ENCODE measurements at regions of chr15 and their contacts with region 1.

Region 1: DNA sequence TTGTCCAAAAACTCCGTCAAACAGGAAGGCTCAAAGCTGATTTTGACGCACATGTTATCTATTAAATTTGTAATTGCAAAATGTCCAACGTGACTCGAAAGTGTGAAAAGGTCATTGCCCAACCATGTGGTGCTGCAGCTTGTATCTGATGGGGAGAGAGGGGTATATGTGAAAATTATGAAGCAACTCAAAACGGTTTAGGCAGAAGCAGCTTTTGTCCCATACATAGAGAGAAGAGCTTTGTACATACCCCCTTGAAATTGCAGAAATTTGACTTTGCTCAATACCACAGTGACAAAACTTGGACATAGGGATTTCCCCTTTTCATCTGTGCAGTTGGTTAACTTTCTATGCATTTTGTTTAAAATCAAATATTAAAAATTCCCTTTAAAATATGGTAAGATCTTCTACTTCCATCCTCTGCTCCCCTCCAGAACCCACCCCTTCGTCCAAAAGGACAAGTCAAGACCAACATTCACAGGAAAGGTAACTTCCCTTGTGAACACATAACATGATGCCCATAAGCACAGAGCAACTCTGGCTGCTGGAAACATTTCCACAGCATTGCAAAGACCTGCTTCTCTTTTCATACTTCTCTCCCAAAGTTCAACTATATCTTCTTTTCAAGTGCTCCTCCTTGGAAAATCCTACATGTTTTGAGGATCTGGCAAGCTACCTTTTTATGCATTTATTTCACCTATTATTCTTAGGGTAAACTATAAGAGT is 253.7 kb upstream of the THBS1 start:
- DNase-seq: peak; percentile 95 to 97 (median 97)
- H3K4me3 ChIP-seq: peak overlapping the region in 1 of 3 experiments; percentile 5
- H3K4me3 Mint-ChIP-seq: peak overlapping the region in 1 of 2 donors; percentile 53
- H3K27ac ChIP-seq: peak overlapping the region; percentile 86 to 88
- H3K27ac Mint-ChIP-seq: peak overlapping the region; percentile 95 to 99 (median 98)
- H3K4me1 ChIP-seq: peaks cover 57 to 59% of the 10 kb centered on the region in 2 donors
- H3K4me1 Mint-ChIP-seq: peaks cover 60% of the 10 kb centered on the region
- H3K27me3 ChIP-seq: no peaks in the 10 kb centered on the region
- H3K27me3 Mint-ChIP-seq: no peaks in the 10 kb centered on the region
- CTCF ChIP-seq: no peak

Region 2: GRCh38 chr15:39260391-39260790 is 66.8 kb before region 1 on chr15:
- intact Hi-C with region 1: loop called (anchors 5 to 10 kb)
- DNase-seq: peak in 1 of 3 donors; percentile 12
- H3K4me3 ChIP-seq: no peak overlapping the region
- H3K4me3 Mint-ChIP-seq: peak overlapping the region in 1 of 2 donors; percentile 64
- H3K27ac ChIP-seq: no peak overlapping the region
- H3K27ac Mint-ChIP-seq: peak overlapping the region in 2 of 7 donors; percentile 28 to 62
- H3K4me1 ChIP-seq: peaks cover 15 to 18% of the 10 kb centered on the region in 2 donors
- H3K4me1 Mint-ChIP-seq: peaks cover 27% of the 10 kb centered on the region
- H3K27me3 ChIP-seq: peaks cover 7 to 9% of the 10 kb centered on the region in 2 donors
- H3K27me3 Mint-ChIP-seq: peaks cover 4 to 20% (median 8%) of the 10 kb centered on the region in 3 donors
- CTCF ChIP-seq: no peak

Region 3: GRCh38 chr15:39267685-39268084 is 59.5 kb before region 1 on chr15:
- intact Hi-C with region 1: loop called (anchors 5 to 10 kb)
- DNase-seq: peak; percentile 54 to 73 (median 56)
- H3K4me3 ChIP-seq: no peak overlapping the region
- H3K4me3 Mint-ChIP-seq: no peak overlapping the region
- H3K27ac ChIP-seq: no peak overlapping the region
- H3K27ac Mint-ChIP-seq: no peak overlapping the region
- H3K4me1 ChIP-seq: peaks cover 5% of the 10 kb centered on the region in 2 donors
- H3K4me1 Mint-ChIP-seq: peaks cover 12% of the 10 kb centered on the region
- H3K27me3 ChIP-seq: peaks cover 7 to 15% of the 10 kb centered on the region in 2 donors
- H3K27me3 Mint-ChIP-seq: peaks cover 11 to 38% (median 20%) of the 10 kb centered on the region in 3 donors
- CTCF ChIP-seq: no peak

Region 4: GRCh38 chr15:39358441-39359041 is 31.4 kb after region 1 on chr15:
- intact Hi-C with region 1: no loop called
- DNase-seq: no peak
- H3K4me3 ChIP-seq: no peak overlapping the region
- H3K4me3 Mint-ChIP-seq: no peak overlapping the region
- H3K27ac ChIP-seq: no peak overlapping the region
- H3K27ac Mint-ChIP-seq: no peak overlapping the region
- H3K4me1 ChIP-seq: peaks cover 9 to 20% of the 10 kb centered on the region in 2 donors
- H3K4me1 Mint-ChIP-seq: peaks cover 19% of the 10 kb centered on the region
- H3K27me3 ChIP-seq: no peaks in the 10 kb centered on the region
- H3K27me3 Mint-ChIP-seq: peaks cover 0 to 4% (median 4%) of the 10 kb centered on the region in 3 donors
- CTCF ChIP-seq: no peak

Region 5: DNA sequence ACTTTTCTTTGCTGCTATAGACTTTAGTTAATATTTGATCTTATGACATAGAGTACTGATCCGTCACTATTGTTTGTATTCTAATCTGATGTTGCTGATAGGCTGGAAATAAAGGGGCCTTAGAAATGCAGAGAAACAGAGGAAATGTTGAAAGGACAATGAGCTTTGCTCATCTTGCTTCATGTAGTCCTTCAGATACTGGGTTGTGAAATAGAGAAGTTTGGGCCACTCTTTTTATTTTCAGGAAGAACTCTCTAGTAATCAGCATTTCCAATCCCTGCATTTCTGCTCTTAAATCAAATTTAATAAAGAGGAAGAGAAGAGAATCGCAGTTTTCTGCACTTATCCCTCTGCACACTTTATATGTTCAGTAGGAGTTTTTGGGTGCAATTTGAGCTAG is 61.0 kb after region 1 on chr15:
- intact Hi-C with region 1: loop called in 1 of 2 experiments (anchors 5 kb)
- DNase-seq: peak; percentile 86 to 94 (median 91)
- H3K4me3 ChIP-seq: peak overlapping the region in 1 of 3 experiments; percentile 17
- H3K4me3 Mint-ChIP-seq: peak overlapping the region in 1 of 2 donors; percentile 36
- H3K27ac ChIP-seq: peak overlapping the region in 1 of 2 donors; percentile 89
- H3K27ac Mint-ChIP-seq: peak overlapping the region; percentile 87 to 95 (median 93)
- H3K4me1 ChIP-seq: peaks cover 51 to 84% of the 10 kb centered on the region in 2 donors
- H3K4me1 Mint-ChIP-seq: peaks cover 68% of the 10 kb centered on the region
- H3K27me3 ChIP-seq: no peaks in the 10 kb centered on the region
- H3K27me3 Mint-ChIP-seq: no peaks in the 10 kb centered on the region
- CTCF ChIP-seq: no peak

Region 6: DNA sequence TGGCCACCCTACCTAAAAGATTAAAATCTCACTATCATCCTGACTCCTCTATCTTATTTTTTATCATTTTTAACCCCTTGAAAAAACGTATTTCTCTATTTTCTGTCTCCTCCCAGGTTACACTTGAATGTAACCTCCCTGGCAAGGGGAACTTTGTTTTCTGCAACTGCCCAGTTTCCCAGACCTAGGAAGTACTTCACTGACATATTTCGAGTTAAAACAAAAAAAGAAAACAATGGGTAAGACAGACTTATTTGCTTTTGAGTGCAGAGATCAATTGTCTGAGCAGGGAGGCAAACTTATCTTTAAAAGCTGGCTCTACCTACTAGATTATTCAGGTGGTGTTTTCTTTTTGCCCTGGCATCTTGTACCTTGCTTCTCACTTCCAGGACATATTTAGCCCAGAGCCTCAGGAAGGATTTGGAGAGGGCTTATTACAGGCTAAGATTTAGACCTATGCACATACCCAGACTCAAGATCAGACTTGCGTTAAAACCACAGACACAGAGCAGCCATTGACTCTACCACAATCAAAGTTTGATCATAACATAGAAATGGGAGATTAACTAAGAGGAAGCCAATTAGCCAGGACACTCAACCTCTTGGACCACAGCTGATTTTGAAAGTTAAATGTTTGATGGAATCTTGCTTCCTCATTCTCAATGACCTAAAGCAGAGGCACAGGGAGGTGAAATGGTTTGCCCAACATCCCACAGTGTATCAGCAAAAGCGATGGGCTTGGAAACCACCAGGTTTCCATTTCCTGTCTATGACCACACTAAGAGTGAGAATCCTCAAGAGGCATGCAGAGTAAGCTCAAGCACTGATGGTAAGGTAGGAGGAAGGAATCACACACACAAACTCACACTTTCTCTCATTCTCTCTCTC is 84.2 kb after region 1 on chr15:
- intact Hi-C with region 1: loop called in 1 of 2 experiments (anchors 5 kb)
- DNase-seq: peak; percentile 85 to 96 (median 92)
- H3K4me3 ChIP-seq: no peak overlapping the region
- H3K4me3 Mint-ChIP-seq: peak overlapping the region in 1 of 2 donors; percentile 19
- H3K27ac ChIP-seq: peak overlapping the region in 1 of 2 donors; percentile 91
- H3K27ac Mint-ChIP-seq: peak overlapping the region; percentile 73 to 98 (median 93)
- H3K4me1 ChIP-seq: peaks cover 54 to 55% of the 10 kb centered on the region in 2 donors
- H3K4me1 Mint-ChIP-seq: peaks cover 70% of the 10 kb centered on the region
- H3K27me3 ChIP-seq: no peaks in the 10 kb centered on the region
- H3K27me3 Mint-ChIP-seq: peaks cover 0 to 2% (median 0%) of the 10 kb centered on the region in 3 donors
- CTCF ChIP-seq: no peak

Region 7: DNA sequence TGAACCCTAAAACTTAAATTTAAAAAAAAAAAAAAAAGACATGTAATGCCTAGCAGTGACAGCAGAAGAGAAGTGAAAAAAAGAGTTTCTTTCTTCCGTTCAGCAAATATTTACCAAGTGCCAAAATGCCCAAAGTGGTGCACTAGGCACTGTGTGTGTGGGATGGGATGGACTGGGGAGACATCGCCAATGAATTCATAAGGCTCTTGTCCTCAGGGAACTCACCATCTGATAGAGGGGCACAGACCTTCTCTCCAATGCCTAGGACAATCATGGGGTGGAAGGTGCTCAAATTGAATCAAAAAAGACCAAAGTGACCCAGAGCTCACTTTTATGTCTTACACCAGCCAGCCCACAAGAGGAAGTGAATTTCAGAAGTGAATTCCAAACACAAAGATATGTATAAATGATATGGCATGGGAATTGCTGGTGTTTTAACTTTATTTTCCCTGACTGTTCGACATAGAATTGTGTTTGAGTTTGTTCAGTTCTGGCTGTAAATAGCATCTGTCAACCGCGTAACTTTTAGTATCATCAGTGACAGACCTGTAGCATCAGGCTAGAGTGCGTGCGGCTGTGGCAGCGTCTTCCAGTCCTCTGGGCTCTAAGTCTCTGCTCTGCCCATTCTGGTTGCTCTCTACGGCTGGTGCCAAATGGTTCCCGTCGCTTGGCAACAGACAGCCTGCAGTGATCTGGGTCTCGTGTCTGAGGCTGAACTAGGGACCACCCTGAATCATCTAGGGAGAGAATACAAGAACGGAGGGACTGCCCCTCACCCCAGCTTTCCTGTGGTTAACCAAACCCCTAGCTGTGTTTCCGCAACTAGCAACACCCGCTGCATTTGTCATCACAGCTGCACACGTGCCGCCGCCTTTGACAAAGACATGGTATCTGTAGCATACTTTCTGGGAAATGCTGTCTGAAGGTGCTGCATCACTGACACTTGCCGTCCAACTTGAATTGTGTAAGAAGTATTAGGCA is 99.7 kb after region 1 on chr15:
- intact Hi-C with region 1: loop called in 1 of 2 experiments (anchors 5 kb)
- DNase-seq: peak; percentile 98 to 100 (median 99)
- H3K4me3 ChIP-seq: peak overlapping the region; percentile 18 to 58 (median 37)
- H3K4me3 Mint-ChIP-seq: peak overlapping the region; percentile 73 to 93
- H3K27ac ChIP-seq: peak overlapping the region; percentile 81 to 100
- H3K27ac Mint-ChIP-seq: peak overlapping the region; percentile 97 to 99 (median 98)
- H3K4me1 ChIP-seq: peaks cover 49 to 53% of the 10 kb centered on the region in 2 donors
- H3K4me1 Mint-ChIP-seq: peaks cover 48% of the 10 kb centered on the region
- H3K27me3 ChIP-seq: no peaks in the 10 kb centered on the region
- H3K27me3 Mint-ChIP-seq: peaks cover 0 to 4% (median 0%) of the 10 kb centered on the region in 3 donors
- CTCF ChIP-seq: no peak

Measured in CD14-positive monocyte (primary cell).